ENCODE measurements at regions of chr3 and their contacts with region 1.

Region 1: DNA sequence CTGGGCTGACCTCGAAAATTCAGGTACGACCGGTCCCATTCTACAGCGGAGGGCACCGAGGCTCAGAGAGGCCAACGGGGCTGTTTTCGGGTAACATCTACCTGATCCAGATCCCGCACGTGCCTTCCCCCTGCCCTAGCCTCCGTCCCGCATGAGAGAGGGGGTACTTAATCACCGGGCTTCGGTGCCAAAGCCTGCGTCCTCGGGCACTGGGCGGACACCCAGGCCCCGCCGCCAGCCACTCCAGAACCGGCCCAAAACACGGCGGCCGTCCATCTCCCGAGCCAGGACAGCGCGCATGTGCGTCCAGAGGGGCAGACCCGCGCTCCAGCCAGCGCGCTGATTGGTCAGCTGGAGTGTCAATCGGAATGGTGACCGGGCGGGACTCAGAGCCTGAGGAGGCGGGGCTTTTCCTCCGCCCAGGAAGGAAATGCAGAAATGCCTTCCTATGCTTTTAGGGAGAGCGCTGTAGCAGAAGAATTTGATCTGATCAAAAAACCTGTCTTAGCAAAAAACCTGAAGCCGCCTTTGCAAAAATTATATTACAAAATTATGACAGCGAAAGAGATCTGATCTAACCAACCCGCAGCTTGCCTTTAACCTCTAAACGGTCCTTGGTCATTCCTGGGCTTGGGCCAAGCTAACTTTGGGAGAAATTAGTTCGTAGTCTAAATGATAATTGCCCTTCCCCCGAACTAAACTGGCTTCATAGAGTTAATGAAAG is at the start of gene RPUSD3:
- DNase-seq: peak; percentile 99
- ATAC-seq: peak; percentile 98 to 100 (median 100)
- H3K4me3 ChIP-seq: peak within 1 kb of the TSS; percentile 62 to 87 (median 76)
- H3K27ac ChIP-seq: peak within 1 kb of the TSS; percentile 68 to 90 (median 82)
- H3K4me1 ChIP-seq: peaks cover 0 to 18% (median 10%) of the 10 kb centered on the region in 9 donors
- H3K27me3 ChIP-seq: no peaks in the 10 kb centered on the region
- CTCF ChIP-seq: no peak
- total RNA-seq, gene RPUSD3: 26.4 to 42.3 (median 29.4) TPM

Region 2: DNA sequence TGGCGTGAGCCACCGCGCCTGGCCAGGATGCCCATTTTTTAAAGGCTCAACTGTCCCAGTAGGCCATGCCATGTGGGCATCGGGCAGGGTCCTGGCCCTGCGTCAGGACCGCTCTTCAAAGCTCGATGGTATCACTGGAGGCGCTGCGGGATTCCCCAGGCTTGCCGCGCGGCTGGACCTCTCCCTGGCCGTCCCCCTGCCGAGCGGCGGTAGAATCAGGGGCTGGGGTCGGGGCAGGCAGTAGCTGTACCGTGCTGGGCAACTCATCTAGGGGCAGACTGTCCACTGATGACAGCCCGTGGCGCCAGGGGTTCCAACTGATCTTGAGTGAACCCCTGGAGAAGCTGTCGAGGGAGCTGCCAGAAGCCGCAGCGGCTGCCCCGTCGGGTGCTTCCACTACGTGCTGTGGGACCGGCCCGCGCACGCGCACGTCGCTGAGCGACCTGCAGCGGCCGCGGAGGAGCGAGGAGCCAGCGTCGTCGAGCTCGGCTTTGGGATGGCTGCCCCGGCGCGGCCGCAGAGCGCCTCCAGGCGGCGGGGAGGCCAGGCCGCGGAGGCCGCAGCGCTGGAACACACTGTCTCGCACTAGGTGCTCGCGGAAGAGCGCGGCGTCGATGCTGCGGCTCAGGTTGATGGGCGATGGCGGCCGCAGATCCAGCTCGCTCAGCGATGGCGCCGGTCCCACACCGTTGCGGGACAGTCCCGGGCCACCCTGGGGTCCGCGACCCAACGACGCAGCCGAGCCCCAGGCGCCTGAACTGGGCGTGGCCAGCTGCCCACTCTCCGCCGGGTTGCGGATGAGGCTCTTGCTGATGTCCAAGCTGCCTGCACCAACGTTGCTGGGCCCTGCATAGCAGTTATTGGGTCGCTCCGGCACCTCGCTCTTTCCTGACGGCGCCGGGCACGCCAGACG is 102.5 kb after region 1 on chr3:
- intact Hi-C with region 1: loop called in 1 of 10 experiments (anchors 10 kb)
- DNase-seq: peak; percentile 81 to 89
- ATAC-seq: peak; percentile 82 to 92 (median 88)
- H3K4me3 ChIP-seq: peak overlapping the region; percentile 39 to 86 (median 64)
- H3K27ac ChIP-seq: peak overlapping the region; percentile 29 to 88 (median 76)
- H3K4me1 ChIP-seq: peaks cover 0 to 24% (median 17%) of the 10 kb centered on the region in 9 donors
- H3K27me3 ChIP-seq: peaks cover 0 to 3% (median 0%) of the 10 kb centered on the region in 7 donors
- CTCF ChIP-seq: peak; percentile 65 to 87 (median 75)